Panc1 (cell line): ENCODE measurements at regions of chr3 and their contacts with region 1.

Region 1: DNA sequence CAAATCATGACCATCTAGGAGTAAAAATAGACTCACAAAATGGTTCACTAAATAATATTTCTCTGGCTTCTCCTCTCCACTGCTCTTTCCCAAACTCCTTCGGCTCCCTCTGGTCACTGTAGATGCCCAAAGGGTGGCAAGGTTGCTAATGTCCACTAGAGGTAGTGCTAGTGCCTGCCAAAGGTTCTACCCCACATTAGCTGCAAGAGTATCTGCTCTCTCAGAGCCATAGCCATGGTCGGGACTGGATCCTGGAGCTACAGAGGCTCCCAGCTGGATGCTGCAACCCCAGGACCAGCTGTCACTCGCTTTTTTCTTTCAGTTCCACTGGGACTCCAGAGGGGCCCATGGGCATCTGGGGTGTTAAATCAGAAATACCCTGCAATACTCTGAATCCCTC is 8.5 kb downstream of the HTR3D start:
- DNase-seq: no peak
- ATAC-seq: peak; percentile 97
- H3K4me3 ChIP-seq: no peak overlapping the region
- H3K27ac ChIP-seq: no peak overlapping the region
- H3K4me1 ChIP-seq: no peaks in the 10 kb centered on the region
- H3K27me3 ChIP-seq: 0 out of 2 replicates have a peak, but pooled peaks cover 1% of the 10 kb centered on the region
- CTCF ChIP-seq: peak; percentile 90

Region 2: DNA sequence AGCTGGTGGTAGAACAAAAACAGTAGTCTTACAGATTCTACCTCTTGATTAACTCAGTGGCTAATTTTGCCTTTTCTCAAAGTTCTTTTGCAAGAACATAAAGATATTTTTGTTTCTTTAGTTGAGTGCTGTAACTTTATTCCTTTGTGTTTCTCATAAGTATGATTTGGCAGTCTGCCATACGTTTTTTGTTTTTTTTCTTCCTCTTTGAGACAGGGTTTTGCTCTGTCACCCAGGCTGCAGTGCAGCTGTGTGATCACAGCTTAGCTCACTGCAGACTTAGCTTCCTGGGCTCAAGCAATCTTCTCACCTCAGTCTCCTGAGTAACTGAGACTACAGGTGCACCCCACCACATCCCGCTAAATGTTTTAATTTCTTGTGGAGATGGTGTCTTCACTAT is 764.6 kb before region 1 on chr3:
- CTCF ChIA-PET with region 1: no interaction called
- POLR2A ChIA-PET with region 1: no interaction called
- in situ Hi-C with region 1: no loop called
- intact Hi-C with region 1: no loop called
- DNase-seq: no peak
- ATAC-seq: no peak
- H3K4me3 ChIP-seq: no peak overlapping the region
- H3K27ac ChIP-seq: no peak overlapping the region
- H3K4me1 ChIP-seq: peaks cover 12% of the 10 kb centered on the region
- H3K27me3 ChIP-seq: no peaks in the 10 kb centered on the region
- CTCF ChIP-seq: no peak

Region 3: DNA sequence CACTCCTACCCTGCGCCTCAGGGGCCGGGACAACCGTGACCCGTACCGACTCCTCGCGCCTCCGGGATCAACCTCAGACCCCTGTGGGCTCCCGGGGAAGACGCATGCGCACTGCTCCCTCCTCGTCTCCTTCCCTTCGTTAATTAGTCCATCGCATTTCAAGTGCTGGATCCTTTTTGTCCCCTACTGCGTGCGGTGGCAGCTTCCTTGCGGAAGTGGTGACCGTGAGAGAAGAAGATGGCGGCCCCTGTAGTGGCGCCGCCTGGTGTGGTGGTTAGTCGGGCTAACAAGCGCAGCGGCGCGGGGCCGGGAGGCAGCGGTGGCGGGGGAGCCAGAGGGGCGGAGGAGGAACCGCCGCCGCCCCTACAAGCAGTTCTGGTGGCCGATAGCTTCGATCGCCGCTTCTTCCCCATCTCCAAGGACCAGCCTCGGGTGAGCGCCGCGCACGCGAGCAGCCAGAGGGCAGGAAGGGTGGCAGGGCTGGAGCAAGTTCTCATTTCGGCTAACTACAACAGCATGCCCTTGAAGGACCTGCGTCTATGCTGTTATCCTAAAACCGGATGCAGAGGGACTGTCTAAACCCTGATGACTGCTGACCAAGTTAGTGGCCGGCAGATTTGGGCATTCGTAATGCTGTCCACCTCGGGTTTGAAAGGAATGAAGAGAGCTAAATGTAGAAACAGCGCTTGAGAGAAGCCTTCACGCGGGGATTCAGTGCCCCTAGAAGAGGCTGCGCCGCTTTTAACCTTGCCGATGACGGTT is 95.3 kb after region 1 on chr3 and contains the start of gene EIF2B5:
- CTCF ChIA-PET with region 1: interaction called, 3 read pairs
- POLR2A ChIA-PET with region 1: no interaction called
- in situ Hi-C with region 1: no loop called
- intact Hi-C with region 1: loop called (anchors 10 kb)
- DNase-seq: peak; percentile 92
- ATAC-seq: peak; percentile 91
- H3K4me3 ChIP-seq: peak within 1 kb of the TSS; percentile 96 to 100
- H3K27ac ChIP-seq: peak within 1 kb of the TSS; percentile 98
- H3K4me1 ChIP-seq: peaks cover 12% of the 10 kb centered on the region
- H3K27me3 ChIP-seq: no peaks in the 10 kb centered on the region
- CTCF ChIP-seq: peak; percentile 54; the same call in 1 of the 2 replicates
- total RNA-seq, gene EIF2B5: 60.2 TPM

Region 4: GRCh38 chr3:184335661-184336546 is 295.9 kb after region 1 on chr3:
- CTCF ChIA-PET with region 1: no interaction called
- POLR2A ChIA-PET with region 1: no interaction called
- in situ Hi-C with region 1: no loop called
- intact Hi-C with region 1: no loop called
- DNase-seq: no peak
- ATAC-seq: peak; percentile 79
- H3K4me3 ChIP-seq: peak overlapping the region; percentile 53 to 80
- H3K27ac ChIP-seq: peak overlapping the region; percentile 92
- H3K4me1 ChIP-seq: peaks cover 58% of the 10 kb centered on the region
- H3K27me3 ChIP-seq: no peaks in the 10 kb centered on the region
- CTCF ChIP-seq: no peak